ENCODE measurements at regions of chr13 and their contacts with region 1.

Region 1: DNA sequence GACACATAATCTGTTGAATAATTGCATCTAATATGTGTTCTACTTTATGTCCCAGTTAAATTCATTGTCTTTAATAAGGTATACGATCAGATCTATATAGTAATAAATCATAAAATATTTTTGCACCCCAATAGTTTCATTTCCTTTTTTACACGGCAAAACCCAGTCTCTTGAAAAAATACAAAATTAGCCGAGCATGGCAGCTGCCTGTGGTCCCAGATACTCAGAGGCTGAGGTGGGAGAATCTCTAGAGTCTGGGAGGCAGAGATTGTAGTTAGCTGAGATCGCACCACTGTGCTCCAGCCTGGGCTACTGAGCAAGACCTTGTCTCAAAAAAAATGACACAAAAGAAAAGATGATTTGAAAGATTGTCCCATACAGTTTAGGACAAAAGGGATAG is 52.3 kb upstream of the PARP4 start:
- DNase-seq: no peak
- ATAC-seq: no peak
- H3K4me3 ChIP-seq: no peak overlapping the region
- H3K4me3 Mint-ChIP-seq: no peak overlapping the region
- H3K27ac ChIP-seq: no peak overlapping the region
- H3K27ac Mint-ChIP-seq: no peak overlapping the region
- H3K4me1 ChIP-seq: peaks cover 0 to under 1% of the 10 kb centered on the region in 2 experiments
- H3K4me1 Mint-ChIP-seq: peaks cover 2 to 6% (median 2%) of the 10 kb centered on the region in 3 donors
- H3K27me3 ChIP-seq: peaks cover 0 to 10% of the 10 kb centered on the region in 2 experiments
- H3K27me3 Mint-ChIP-seq: peaks cover 8 to 28% of the 10 kb centered on the region in 2 donors

Region 2: DNA sequence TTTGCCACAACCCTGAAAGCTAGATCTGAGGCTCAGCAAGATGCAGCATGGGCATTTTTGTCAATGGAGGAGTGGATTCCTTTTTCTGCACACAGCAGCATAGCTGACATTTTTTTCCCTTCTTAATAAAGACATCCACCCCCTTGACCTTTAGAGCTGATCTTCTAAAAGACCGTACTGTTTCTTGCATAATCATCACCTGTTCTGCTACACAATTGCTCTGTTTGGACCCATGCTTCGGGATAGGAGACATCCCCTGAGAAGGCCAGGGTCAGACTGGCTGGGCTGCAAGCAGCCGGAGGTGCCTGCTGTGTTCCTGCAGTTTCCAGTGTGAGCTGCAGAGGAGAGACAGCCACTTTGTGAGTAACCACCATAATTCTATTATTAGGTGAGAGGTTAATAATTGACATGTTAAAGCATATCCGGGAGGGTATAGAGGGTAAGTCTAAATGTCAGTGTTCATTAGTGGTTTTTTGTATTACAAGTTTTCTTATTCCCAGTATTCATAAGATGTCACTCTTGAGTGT is 559.1 kb before region 1 on chr13:
- CTCF ChIA-PET with region 1: no interaction called
- POLR2A ChIA-PET with region 1: interaction called in 1 of 2 experiments, 12 read pairs
- DNase-seq: no peak
- ATAC-seq: no peak
- H3K4me3 ChIP-seq: no peak overlapping the region
- H3K4me3 Mint-ChIP-seq: no peak overlapping the region
- H3K27ac ChIP-seq: no peak overlapping the region
- H3K27ac Mint-ChIP-seq: no peak overlapping the region
- H3K4me1 ChIP-seq: no peaks in the 10 kb centered on the region
- H3K4me1 Mint-ChIP-seq: no peaks in the 10 kb centered on the region
- H3K27me3 ChIP-seq: peaks cover 0 to 8% of the 10 kb centered on the region in 2 experiments
- H3K27me3 Mint-ChIP-seq: peaks cover 3 to 6% of the 10 kb centered on the region in 2 donors